A549 (cell line): ENCODE measurements at regions of chr5 and their contacts with region 1.

Region 1: GRCh38 chr5:140647042-140647341 is 438 bp downstream of the NDUFA2 start:
- DNase-seq: no peak
- ATAC-seq: peak; percentile 32 to 39
- H3K4me3 ChIP-seq: peak overlapping the region; percentile 83
- H3K27ac ChIP-seq: peak overlapping the region; percentile 85 to 91
- H3K4me1 ChIP-seq: peaks cover 11% of the 10 kb centered on the region; the same call in 1 of the 3 replicates
- CTCF ChIP-seq: no peak
- EP300 ChIP-seq: no peak
- POLR2A ChIP-seq: no peak
- RAD21 ChIP-seq: no peak

Region 2: DNA sequence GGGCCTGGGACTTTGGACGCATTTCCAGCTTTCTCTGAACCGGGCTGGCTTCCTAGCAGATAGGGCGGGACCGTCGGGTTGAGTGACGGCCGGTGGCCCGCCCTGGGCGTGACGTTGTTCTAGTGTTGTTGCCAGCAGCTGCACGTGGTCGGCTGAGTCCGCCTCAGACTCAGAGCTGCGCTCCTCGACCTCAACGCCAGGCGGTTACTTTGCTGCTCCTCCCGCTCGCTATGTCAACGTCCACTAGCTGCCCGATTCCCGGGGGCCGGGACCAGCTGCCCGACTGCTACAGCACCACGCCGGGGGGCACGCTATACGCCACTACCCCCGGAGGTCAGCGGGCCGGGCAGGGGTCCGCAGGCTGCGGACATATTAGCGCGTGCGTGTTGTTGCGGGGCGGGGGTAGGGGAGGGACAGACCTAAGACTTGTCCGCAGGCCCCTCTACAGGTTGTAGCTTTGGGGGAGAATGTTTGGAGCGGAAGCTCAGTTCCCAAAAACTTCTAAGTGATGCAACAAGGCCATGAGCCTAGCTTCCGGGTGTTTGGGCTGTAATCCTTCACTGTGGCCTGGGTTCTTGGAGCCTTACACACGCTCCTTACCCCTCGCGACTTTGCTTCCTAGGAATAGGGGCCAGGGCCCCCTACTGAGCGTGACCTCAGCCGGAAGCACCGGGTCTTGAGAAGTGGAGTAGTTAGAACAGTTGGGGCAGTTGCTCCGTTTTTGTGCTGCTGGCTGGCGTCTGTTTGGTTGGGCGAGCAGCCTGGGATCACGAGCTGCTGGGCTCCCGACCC is 99.3 kb before region 1 on chr5 and contains the start of gene EIF4EBP3:
- CTCF ChIA-PET with region 1: no interaction called
- POLR2A ChIA-PET with region 1: interaction called, 18 read pairs
- DNase-seq: peak; percentile 87 to 90
- ATAC-seq: peak; percentile 94 to 96
- H3K4me3 ChIP-seq: no peak within 1 kb of the TSS
- H3K27ac ChIP-seq: peak within 1 kb of the TSS; percentile 56 to 75
- H3K4me1 ChIP-seq: peaks cover 26% of the 10 kb centered on the region
- CTCF ChIP-seq: no peak
- EP300 ChIP-seq: no peak
- POLR2A ChIP-seq: no peak
- RAD21 ChIP-seq: no peak
- polyA plus RNA-seq, gene EIF4EBP3: 2.0 and 2.9 TPM in 2 replicates

Region 3: DNA sequence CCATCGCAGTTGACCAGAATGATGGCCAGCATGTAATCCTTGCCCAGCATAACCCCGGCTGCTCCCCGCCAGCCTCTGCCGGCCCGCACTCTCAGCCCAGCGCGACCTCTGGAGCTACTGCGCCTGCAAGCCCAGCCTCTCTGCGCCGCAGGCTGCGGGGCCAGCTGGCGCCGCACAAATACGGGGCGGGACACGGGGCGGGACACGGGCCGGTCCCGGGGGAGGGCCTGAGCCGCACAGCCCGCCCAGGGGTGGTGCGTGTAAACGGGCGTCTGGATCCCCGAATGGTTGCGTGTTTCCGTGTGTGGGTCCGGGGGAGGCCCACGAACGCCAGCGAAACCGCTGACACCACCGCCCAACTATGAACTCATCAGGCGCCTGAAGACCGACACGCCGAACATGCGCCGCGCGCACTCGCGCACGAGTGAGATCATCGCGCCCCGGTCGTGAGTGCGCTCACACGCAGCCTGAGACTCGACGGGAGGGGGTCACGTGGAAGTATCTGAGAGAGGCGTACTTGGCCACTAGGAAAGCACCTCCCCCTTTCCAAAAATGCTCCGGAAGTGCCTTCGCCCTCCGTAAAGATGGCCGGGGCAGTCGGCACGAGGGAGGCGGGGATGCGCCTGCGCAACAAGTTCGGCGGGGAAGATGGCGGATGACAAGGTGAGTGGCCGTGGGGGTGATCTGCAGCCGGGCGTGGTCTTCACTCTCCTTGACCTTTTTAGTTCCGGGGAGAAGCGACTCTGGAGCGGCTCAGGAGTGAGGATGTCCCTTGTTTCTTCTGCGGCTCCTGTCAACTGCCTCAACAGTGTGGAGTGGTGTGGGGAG is 82.6 kb before region 1 on chr5 and contains the starts of genes APBB3 and SLC35A4:
- CTCF ChIA-PET with region 1: interaction called, 3 read pairs
- POLR2A ChIA-PET with region 1: interaction called, 16 read pairs
- DNase-seq: peak; percentile 96 to 98
- ATAC-seq: peak; percentile 87 to 94
- H3K4me3 ChIP-seq: peak within 1 kb of the TSS; percentile 84
- H3K27ac ChIP-seq: peak within 1 kb of the TSS; percentile 88
- H3K4me1 ChIP-seq: peaks cover 18% of the 10 kb centered on the region
- CTCF ChIP-seq: no peak
- EP300 ChIP-seq: no peak
- POLR2A ChIP-seq: peak; percentile 75
- RAD21 ChIP-seq: peak in 1 of 2 experiments; percentile 10; a peak in 2 of 5 replicates
- polyA plus RNA-seq, gene APBB3: 11.7 and 13.4 TPM in 2 replicates
- polyA plus RNA-seq, gene SLC35A4: 79.5 and 135 TPM in 2 replicates

Region 4: DNA sequence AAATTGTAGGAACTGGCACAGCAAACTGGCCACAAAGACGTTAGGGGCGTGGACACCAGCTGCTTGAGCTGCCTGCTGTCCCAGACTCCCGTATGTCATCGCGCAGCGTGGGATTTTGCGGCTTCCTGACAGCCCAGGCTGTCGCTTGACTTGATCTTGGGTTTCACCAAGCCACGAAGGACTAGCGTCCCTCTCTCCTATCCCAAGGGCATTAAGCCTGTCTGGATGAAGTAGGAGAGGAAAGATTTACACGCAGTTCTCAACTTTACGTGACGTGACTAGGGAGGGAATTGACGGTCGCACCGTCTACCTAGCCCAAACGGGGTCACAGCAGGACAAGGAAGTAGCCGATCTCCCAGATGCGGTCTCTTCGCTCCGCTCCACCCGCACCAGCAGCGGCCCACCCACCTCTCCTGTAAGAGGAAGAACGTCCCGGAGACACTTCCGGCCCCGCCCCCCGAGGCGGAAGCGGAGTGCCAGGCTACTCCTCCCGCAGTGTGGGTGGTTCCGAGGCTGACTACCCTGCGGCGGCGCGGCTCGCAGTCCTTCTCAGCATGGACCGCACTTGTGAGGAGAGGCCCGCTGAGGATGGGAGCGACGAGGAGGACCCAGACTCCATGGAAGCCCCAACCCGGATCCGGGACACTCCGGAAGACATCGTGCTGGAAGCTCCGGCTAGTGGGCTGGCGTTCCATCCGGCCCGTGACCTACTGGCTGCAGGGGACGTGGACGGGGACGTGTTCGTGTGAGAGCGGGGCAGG is 17.5 kb after region 1 on chr5 and contains the start of gene WDR55:
- CTCF ChIA-PET with region 1: interaction called, 4 read pairs
- POLR2A ChIA-PET with region 1: interaction called, 20 read pairs
- DNase-seq: peak; percentile 94 to 97
- ATAC-seq: peak; percentile 97 to 99
- H3K4me3 ChIP-seq: peak within 1 kb of the TSS; percentile 83
- H3K27ac ChIP-seq: peak within 1 kb of the TSS; percentile 84 to 94
- H3K4me1 ChIP-seq: peaks cover 18% of the 10 kb centered on the region; the same call in 1 of the 3 replicates
- CTCF ChIP-seq: no peak
- EP300 ChIP-seq: no peak
- POLR2A ChIP-seq: peak; percentile 95
- RAD21 ChIP-seq: no peak
- polyA plus RNA-seq, gene WDR55: 23.3 and 26.6 TPM in 2 replicates

Region 5: DNA sequence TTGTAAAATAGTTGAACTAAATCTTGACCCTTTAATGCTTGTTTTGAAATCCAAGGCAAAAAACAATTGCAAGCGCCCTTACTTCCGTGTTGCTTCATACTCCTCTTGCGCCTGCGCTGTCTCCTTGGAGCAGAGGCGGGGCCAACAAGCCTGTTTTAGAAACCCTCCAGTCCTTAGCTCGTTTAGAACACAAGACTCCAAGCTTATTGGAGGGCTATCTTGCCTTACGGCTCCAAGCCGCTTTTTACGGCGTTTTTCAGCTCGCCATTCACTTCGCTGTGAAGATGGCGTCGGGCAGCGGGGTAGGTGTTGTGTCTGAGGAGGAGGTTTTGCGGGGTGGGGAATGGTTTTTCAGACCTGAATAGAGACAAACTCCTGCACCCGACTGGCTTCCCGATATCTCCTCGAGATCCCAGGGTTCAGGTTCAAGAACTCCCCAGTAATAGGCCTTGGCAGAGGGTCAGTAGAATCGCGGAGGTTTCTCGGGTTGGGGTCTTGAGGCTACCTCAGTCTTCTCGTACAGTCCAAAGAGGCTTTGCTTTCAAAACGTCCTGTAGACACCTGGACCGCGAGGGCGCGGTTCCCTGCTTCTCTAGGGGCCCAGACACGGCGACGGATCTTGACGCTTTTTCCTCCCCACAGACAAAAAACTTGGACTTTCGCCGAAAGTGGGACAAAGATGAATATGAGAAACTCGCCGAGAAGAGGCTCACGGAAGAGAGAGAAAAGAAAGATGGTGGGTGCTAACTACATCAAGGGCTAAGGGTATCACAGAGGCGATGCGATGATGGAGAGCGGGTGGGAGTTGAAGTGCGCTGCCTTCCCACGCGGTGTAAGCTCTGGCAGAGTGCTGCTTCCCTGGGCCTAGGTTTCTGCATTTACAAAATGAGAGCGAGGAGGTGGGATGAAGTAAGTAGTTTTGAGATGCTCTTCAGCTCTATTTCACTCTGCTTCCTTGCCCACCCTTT is 53.5 kb after region 1 on chr5 and contains the start of gene ZMAT2:
- CTCF ChIA-PET with region 1: interaction called, 4 read pairs
- POLR2A ChIA-PET with region 1: interaction called, 16 read pairs
- DNase-seq: peak; percentile 96 to 99
- ATAC-seq: peak; percentile 94 to 98
- H3K4me3 ChIP-seq: peak within 1 kb of the TSS; percentile 93
- H3K27ac ChIP-seq: peak within 1 kb of the TSS; percentile 82 to 88
- H3K4me1 ChIP-seq: peaks cover 11% of the 10 kb centered on the region; the same call in 2 of the 3 replicates
- CTCF ChIP-seq: no peak
- EP300 ChIP-seq: no peak
- POLR2A ChIP-seq: peak; percentile 59
- RAD21 ChIP-seq: no peak
- polyA plus RNA-seq, gene ZMAT2: 62.1 and 90.9 TPM in 2 replicates

Region 6: GRCh38 chr5:140718241-140718580 is 71.2 kb after region 1 on chr5:
- CTCF ChIA-PET with region 1: interaction called, 6 read pairs
- POLR2A ChIA-PET with region 1: interaction called, 17 read pairs
- DNase-seq: no peak
- ATAC-seq: peak; percentile 18 to 47
- H3K4me3 ChIP-seq: peak overlapping the region; percentile 44
- H3K27ac ChIP-seq: peak overlapping the region; percentile 84 to 92
- H3K4me1 ChIP-seq: no peaks in the 10 kb centered on the region
- CTCF ChIP-seq: no peak
- EP300 ChIP-seq: no peak
- POLR2A ChIP-seq: no peak
- RAD21 ChIP-seq: no peak

Region 7: DNA sequence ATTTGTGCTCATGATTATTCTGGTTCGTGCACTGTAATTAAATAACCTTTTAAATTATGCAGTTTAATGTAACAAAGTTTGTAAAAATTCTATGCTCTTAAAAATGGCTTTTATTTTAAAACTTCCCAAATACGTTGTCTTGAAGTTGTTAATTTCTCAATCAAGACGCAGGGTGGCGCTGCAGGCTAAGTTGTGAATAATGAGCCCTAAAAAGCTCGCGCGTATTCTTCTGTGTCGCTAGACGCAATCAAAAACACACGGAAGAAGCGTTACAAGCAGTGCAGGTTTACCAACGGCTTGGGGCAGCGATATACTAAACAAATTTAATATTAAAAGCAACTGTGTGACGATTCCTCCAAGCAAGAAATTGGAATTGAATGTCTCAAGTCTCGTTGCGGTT is 474.6 kb after region 1 on chr5 and contains the start of gene PCDHB4:
- CTCF ChIA-PET with region 1: no interaction called
- POLR2A ChIA-PET with region 1: no interaction called
- DNase-seq: peak in 1 of 2 experiments; percentile 10
- ATAC-seq: no peak
- H3K4me3 ChIP-seq: no peak within 1 kb of the TSS
- H3K27ac ChIP-seq: no peak within 1 kb of the TSS
- H3K4me1 ChIP-seq: no peaks in the 10 kb centered on the region
- CTCF ChIP-seq: no peak
- EP300 ChIP-seq: no peak
- POLR2A ChIP-seq: no peak
- RAD21 ChIP-seq: no peak
- polyA plus RNA-seq, gene PCDHB4: 0.19 and 0.21 TPM in 2 replicates